MCF 10A (cell line): ENCODE measurements at regions of chr16 and their contacts with region 1.

Region 1: GRCh38 chr16:11977376-11978041 is 975 bp downstream of the SNX29 start:
- DNase-seq: peak; percentile 47
- H3K4me3 Mint-ChIP-seq: peak overlapping the region; percentile 87
- H3K27ac Mint-ChIP-seq: peak overlapping the region; percentile 86
- H3K4me1 Mint-ChIP-seq: peaks cover 30% of the 10 kb centered on the region
- H3K27me3 Mint-ChIP-seq: no peaks in the 10 kb centered on the region
- CTCF ChIP-seq: no peak

Region 2: GRCh38 chr16:11915644-11916523 is 61.6 kb before region 1 on chr16 and contains the start of gene GSPT1:
- CTCF ChIA-PET with region 1: interaction called, 3 read pairs
- POLR2A ChIA-PET with region 1: interaction called, 14 read pairs
- intact Hi-C with region 1: no loop called
- DNase-seq: peak; percentile 98
- H3K4me3 Mint-ChIP-seq: peak within 1 kb of the TSS; percentile 88
- H3K27ac Mint-ChIP-seq: peak within 1 kb of the TSS; percentile 71
- H3K4me1 Mint-ChIP-seq: peaks cover 15% of the 10 kb centered on the region
- H3K27me3 Mint-ChIP-seq: no peaks in the 10 kb centered on the region
- CTCF ChIP-seq: no peak
- total RNA-seq, gene GSPT1: 163 and 199 TPM in 2 replicates

Region 3: DNA sequence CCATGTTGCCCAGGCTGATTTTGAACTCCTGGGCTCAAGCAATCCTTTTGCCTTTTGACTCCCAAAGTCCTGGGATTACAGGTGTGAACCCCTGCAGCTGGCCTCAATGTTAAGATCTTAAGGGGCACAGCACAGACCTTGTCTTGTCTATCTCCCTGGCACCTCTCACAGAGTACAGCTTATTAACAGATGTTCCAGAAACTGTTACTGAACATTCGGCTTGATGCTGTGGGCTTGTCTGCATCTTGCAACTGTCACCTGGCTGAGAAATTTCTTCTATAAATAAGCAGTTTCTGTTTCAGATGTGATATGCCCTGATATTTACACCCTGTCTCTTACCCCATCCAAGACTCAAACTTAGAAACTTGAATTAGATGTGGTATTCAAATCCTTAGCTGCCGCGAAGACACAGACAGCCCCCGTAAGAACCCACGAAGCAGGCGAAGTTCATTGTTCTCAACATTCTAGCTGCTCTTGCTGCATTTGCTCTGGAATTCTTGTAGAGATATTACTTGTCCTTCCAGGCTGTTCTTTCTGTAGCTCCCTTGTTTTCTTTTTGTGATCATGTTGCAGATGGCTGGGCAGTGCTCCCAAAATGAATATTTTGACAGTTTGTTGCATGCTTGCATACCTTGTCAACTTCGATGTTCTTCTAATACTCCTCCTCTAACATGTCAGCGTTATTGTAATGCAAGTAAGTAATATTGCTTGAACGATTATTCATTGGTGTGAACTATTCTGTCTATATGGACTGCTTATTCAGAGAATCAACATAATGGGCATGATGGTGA is 12.6 kb before region 1 on chr16 and contains the start of gene TNFRSF17:
- CTCF ChIA-PET with region 1: interaction called, 3 read pairs
- POLR2A ChIA-PET with region 1: interaction called, 10 read pairs
- intact Hi-C with region 1: no loop called
- DNase-seq: no peak
- H3K4me3 Mint-ChIP-seq: no peak within 1 kb of the TSS
- H3K27ac Mint-ChIP-seq: no peak within 1 kb of the TSS
- H3K4me1 Mint-ChIP-seq: peaks cover 6% of the 10 kb centered on the region
- H3K27me3 Mint-ChIP-seq: no peaks in the 10 kb centered on the region
- CTCF ChIP-seq: no peak
- total RNA-seq, gene TNFRSF17: not detected in 2 replicates